ENCODE measurements at regions of chr14 and their contacts with region 1.

Region 1: DNA sequence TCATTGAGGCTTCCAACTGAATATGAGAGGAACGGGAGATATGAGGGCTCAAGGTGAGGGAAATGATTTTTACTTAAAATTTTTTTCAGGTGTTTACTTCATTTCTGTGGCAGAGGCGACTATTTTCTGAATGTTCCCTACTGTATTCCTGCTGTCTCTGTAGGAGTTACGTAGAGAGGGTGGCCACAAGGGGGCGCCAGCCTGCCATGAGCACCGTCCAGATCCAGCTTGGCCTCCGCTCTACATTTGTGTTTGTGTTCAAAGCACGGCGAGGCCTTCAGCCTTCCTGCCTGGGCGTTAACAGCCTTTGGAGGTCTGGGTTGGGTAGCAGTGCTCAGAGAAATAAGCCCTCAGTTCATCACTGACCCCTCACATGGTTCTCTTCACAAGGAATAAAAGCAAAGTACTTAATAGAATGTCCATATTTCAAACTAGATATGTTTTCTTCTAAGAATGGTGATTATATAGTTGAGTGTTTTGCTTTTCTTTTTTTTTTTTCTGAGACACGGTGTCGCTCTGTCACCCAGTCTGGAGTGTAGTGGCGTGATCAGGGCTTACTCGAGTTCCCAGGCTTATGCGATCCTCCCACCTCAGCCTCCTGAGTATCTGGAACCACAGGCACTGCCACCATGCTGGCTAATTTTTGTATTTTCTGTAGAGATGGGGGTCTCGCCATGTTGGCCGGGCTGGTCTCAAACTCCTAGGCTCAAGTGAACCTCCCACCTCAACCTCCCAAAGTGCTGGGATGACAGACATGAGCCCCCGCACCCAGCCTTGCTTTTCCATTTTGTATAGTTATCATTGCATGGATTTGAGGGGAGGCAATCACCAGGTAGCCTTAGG is 22.3 kb downstream of the CKB start:
- DNase-seq: peak in 1 of 2 experiments; percentile 81
- ATAC-seq: peak; percentile 97
- H3K4me3 ChIP-seq: no peak overlapping the region
- H3K27ac ChIP-seq: 0 out of 6 replicates have a peak overlapping the region, but pooled peaks of 1 of the 2 experiments have one; percentile 15
- H3K4me1 ChIP-seq: 0 out of 3 replicates have a peak, but pooled peaks cover 2% of the 10 kb centered on the region
- CTCF ChIP-seq: peak; percentile 91
- EP300 ChIP-seq: no peak
- POLR2A ChIP-seq: no peak
- RAD21 ChIP-seq: peak; percentile 55 to 63

Region 2: DNA sequence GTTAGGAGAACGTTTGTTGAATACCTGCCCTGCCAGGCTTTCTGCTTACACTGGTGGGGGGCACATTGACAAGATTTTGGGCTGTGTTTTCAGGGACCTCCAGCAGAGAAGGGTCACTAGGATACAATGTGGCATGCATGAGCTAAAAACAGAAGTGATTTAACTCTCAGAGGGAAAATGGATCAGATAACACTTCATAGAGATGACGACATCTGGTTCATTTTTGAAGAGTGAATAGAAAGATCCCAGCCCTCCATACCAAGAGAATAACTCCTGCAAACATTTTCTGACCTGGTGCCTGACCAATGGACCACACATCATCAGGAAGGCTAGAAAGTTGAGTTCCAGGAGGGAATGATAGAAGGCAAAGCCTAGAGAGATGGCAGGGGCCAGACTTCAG is 11.4 kb before region 1 on chr14:
- CTCF ChIA-PET with region 1: interaction called, 45 read pairs
- POLR2A ChIA-PET with region 1: no interaction called
- DNase-seq: no peak
- ATAC-seq: no peak
- H3K4me3 ChIP-seq: no peak overlapping the region
- H3K27ac ChIP-seq: no peak overlapping the region
- H3K4me1 ChIP-seq: peaks cover 10% of the 10 kb centered on the region; the same call in 2 of the 3 replicates
- CTCF ChIP-seq: no peak
- EP300 ChIP-seq: no peak
- POLR2A ChIP-seq: no peak
- RAD21 ChIP-seq: no peak

Region 3: GRCh38 chr14:103512701-103513611 is 12.6 kb after region 1 on chr14:
- CTCF ChIA-PET with region 1: interaction called, 97 read pairs
- POLR2A ChIA-PET with region 1: interaction called, 3 read pairs
- DNase-seq: no peak
- ATAC-seq: peak; percentile 12 to 15; a peak in 3 of 6 replicates
- H3K4me3 ChIP-seq: no peak overlapping the region
- H3K27ac ChIP-seq: no peak overlapping the region
- H3K4me1 ChIP-seq: no peaks in the 10 kb centered on the region
- CTCF ChIP-seq: no peak
- EP300 ChIP-seq: no peak
- POLR2A ChIP-seq: no peak
- RAD21 ChIP-seq: no peak

Region 4: GRCh38 chr14:103520657-103521437 is 20.5 kb after region 1 on chr14:
- CTCF ChIA-PET with region 1: interaction called, 97 read pairs
- POLR2A ChIA-PET with region 1: no interaction called
- DNase-seq: peak; percentile 81
- ATAC-seq: peak; percentile 31 to 52
- H3K4me3 ChIP-seq: peak overlapping the region; percentile 79
- H3K27ac ChIP-seq: peak overlapping the region; percentile 71 to 88
- H3K4me1 ChIP-seq: peaks cover 56% of the 10 kb centered on the region
- CTCF ChIP-seq: peak; percentile 57; the same call in 2 of the 3 replicates
- EP300 ChIP-seq: no peak
- POLR2A ChIP-seq: peak; percentile 19; the same call in 1 of the 2 replicates
- RAD21 ChIP-seq: peak in 1 of 2 experiments; percentile 31; a peak in 2 of 5 replicates

Region 5: DNA sequence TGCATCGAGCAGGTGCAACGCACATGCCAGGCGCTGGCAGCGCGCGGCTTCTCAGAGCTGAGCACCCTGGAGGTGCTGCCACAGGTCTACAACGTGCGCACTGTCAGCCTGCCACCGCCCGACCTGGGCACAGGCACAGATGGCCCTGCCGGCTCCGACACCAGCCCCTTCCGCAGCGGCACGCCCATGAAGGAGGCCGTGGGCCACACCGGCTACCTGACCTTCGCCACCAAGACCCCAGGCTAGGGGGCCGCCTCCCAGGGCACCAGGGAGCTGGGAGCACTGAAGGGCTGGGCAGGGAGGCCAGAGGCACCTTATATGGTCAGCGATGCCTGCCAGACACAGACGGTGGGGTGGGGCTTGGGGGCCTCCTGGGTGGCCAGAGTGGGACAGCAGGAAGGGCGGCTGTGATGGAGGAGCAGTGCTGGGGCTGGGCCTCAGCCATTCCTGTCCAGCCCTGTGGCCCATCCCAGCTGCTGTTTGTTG is 34.2 kb after region 1 on chr14:
- CTCF ChIA-PET with region 1: no interaction called
- POLR2A ChIA-PET with region 1: no interaction called
- DNase-seq: no peak
- ATAC-seq: no peak
- H3K4me3 ChIP-seq: no peak overlapping the region
- H3K27ac ChIP-seq: no peak overlapping the region
- H3K4me1 ChIP-seq: peaks cover 16% of the 10 kb centered on the region
- CTCF ChIP-seq: no peak
- EP300 ChIP-seq: no peak
- POLR2A ChIP-seq: no peak
- RAD21 ChIP-seq: no peak